ENCODE measurements at regions of chr1 and their contacts with region 1.

Region 1: GRCh38 chr1:245888809-245889208 is 618.3 kb downstream of the SMYD3 start:
- DNase-seq: peak; percentile 57
- H3K4me3 ChIP-seq: no peak overlapping the region
- H3K27ac ChIP-seq: no peak overlapping the region
- H3K4me1 ChIP-seq: no peaks in the 10 kb centered on the region
- H3K27me3 ChIP-seq: no peaks in the 10 kb centered on the region
- CTCF ChIP-seq: peak in 1 of 2 donors; percentile 48
- POLR2A ChIP-seq: no peak

Region 2: GRCh38 chr1:245874942-245875580 is 13.7 kb before region 1 on chr1:
- CTCF ChIA-PET with region 1: interaction called, 34 read pairs
- POLR2A ChIA-PET with region 1: no interaction called
- dilution Hi-C with region 1: no loop called
- intact Hi-C with region 1: no loop called
- DNase-seq: peak; percentile 95
- H3K4me3 ChIP-seq: no peak overlapping the region
- H3K27ac ChIP-seq: peak overlapping the region; percentile 50
- H3K4me1 ChIP-seq: peaks cover 22% of the 10 kb centered on the region
- H3K27me3 ChIP-seq: no peaks in the 10 kb centered on the region
- CTCF ChIP-seq: no peak
- POLR2A ChIP-seq: no peak

Region 3: DNA sequence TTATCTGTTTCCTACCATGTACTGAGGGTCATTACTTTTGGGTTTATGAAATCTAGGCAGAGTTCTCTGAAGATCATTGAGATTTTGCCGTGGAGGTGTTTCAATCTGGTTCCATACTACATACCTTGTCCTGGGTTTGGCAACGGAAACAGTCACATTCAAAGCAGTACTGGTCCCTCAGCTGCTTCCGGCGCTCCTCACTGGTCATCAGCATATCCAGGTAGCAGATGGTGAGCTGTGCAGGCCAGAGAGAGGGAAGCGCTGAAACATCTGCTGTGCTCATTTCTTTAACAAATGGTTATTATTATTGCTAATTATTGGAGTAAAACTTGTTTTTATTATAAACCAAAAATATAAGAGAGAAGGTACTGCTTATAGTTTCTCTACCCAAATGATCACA is 26.6 kb after region 1 on chr1:
- CTCF ChIA-PET with region 1: interaction called, 10 read pairs
- POLR2A ChIA-PET with region 1: no interaction called
- dilution Hi-C with region 1: no loop called
- intact Hi-C with region 1: no loop called
- DNase-seq: no peak
- H3K4me3 ChIP-seq: no peak overlapping the region
- H3K27ac ChIP-seq: no peak overlapping the region
- H3K4me1 ChIP-seq: no peaks in the 10 kb centered on the region
- H3K27me3 ChIP-seq: no peaks in the 10 kb centered on the region
- CTCF ChIP-seq: no peak
- POLR2A ChIP-seq: no peak

Region 4: GRCh38 chr1:246002725-246003441 is 114.1 kb after region 1 on chr1:
- CTCF ChIA-PET with region 1: interaction called, 39 read pairs
- POLR2A ChIA-PET with region 1: no interaction called
- dilution Hi-C with region 1: no loop called
- intact Hi-C with region 1: loop called (anchors 2 kb)
- DNase-seq: peak; percentile 83
- H3K4me3 ChIP-seq: no peak overlapping the region
- H3K27ac ChIP-seq: no peak overlapping the region
- H3K4me1 ChIP-seq: no peaks in the 10 kb centered on the region
- H3K27me3 ChIP-seq: no peaks in the 10 kb centered on the region
- CTCF ChIP-seq: peak; percentile 70 to 77
- POLR2A ChIP-seq: no peak

Region 5: GRCh38 chr1:246450611-246451251 is 561.9 kb after region 1 on chr1:
- CTCF ChIA-PET with region 1: interaction called, 5 read pairs
- POLR2A ChIA-PET with region 1: no interaction called
- dilution Hi-C with region 1: no loop called
- intact Hi-C with region 1: loop called (anchors 5 kb)
- DNase-seq: peak; percentile 53
- H3K4me3 ChIP-seq: no peak overlapping the region
- H3K27ac ChIP-seq: no peak overlapping the region
- H3K4me1 ChIP-seq: no peaks in the 10 kb centered on the region
- H3K27me3 ChIP-seq: no peaks in the 10 kb centered on the region
- CTCF ChIP-seq: peak; percentile 34 to 42
- POLR2A ChIP-seq: no peak

Measured in endothelial cell of umbilical vein (primary cell).